Upper lobe of right lung (tissue), 1 donor: ENCODE measurements at regions of chr2 and their contacts with region 1.

Region 1: DNA sequence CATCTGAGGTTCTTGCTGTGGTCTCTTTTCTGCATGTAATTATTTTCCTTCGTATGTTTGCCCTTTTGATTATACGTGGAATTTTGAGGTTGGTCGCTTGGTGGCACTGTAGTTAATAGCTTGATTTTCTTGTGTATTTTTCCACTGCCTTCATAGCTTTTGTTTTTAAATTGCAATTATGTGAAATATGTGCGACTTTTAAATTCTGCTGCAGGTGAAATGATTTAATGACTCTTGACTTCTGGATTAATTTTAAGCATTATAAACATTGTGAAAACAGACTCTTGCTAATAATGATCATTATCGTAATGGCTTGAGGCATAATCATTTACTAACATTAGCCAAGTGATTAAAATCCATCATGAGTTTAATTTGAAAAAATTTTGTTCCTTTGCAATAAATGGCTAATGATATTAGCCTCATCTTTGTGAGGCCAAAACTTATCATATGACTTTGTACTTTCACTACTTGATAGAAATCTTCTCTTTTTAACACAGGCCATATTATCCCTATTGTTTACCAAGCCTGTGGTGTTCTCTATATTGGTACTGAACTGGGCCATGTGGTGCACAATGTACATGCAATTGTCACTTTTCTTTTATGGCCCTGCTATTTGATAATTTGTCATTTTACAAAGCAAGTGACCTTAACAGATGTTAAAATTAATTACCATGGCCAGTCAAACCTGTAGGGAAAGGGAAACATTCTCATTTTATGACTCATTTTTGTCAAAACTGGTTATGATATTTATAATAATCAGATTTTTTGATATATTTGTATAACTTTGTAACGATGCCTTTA is 62.8 kb upstream of the NEUROD1 start:
- DNase-seq: no peak
- ATAC-seq: peak; percentile 72
- H3K4me3 ChIP-seq: no peak overlapping the region
- H3K27ac ChIP-seq: no peak overlapping the region
- H3K4me1 ChIP-seq: peaks cover 5% of the 10 kb centered on the region
- H3K27me3 ChIP-seq: no peaks in the 10 kb centered on the region
- CTCF ChIP-seq: peak; percentile 70

Region 2: GRCh38 chr2:181904022-181904632 is 161.0 kb after region 1 on chr2:
- intact Hi-C with region 1: loop called (anchors 10 kb)
- DNase-seq: no peak
- ATAC-seq: peak; percentile 53
- H3K4me3 ChIP-seq: no peak overlapping the region
- H3K27ac ChIP-seq: no peak overlapping the region
- H3K4me1 ChIP-seq: peaks cover 47% of the 10 kb centered on the region
- H3K27me3 ChIP-seq: no peaks in the 10 kb centered on the region
- CTCF ChIP-seq: peak; percentile 59

Region 3: GRCh38 chr2:182077451-182078142 is 334.5 kb after region 1 on chr2:
- intact Hi-C with region 1: loop called (anchors 10 kb)
- DNase-seq: no peak
- ATAC-seq: peak; percentile 98
- H3K4me3 ChIP-seq: no peak overlapping the region
- H3K27ac ChIP-seq: no peak overlapping the region
- H3K4me1 ChIP-seq: no peaks in the 10 kb centered on the region
- H3K27me3 ChIP-seq: no peaks in the 10 kb centered on the region
- CTCF ChIP-seq: peak; percentile 67